Activated T-helper 2 cell treated with anti-CD3 and anti-CD28 coated beads, Interferon-gamma antibody, Interleukin-2, Interleukin-4, amounts not matched to agents 10 μg/mL and 5 μg/mL and 100 μg/mL, durations not matched to agents 14 hours and 24 hours and 36 hours (primary cell): ENCODE measurements at regions of chr6 and their contacts with region 1.

Region 1: DNA sequence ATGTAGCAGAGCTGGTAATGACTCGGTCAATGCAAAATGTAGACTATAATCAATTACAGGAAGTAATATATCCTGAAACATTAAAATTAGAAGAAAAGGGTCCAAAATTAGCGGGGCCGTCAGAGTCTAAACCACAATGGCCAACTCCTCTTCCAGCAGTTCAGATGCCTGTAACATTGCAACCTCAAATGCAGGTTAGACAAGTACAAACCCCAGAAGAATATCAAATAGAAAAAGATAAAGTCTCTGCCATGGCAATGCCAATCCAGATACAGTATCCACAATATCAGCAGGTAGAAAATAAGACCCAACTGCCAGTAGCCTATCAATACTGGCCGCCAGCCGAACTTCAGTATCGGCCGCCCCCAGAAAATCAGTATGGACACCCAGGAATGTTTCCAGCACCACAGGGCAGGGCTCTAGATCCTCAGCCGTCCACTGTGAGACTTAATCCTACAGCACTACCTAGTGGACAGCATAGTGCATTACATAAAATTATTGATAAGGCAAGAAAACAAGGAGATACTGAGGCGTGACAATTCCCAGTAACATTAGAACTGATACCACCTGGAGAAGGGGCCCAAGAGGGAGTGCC is 158.4 kb downstream of the GPX5 start:
- DNase-seq: no peak
- H3K4me3 Mint-ChIP-seq: no peak overlapping the region
- H3K27ac Mint-ChIP-seq: no peak overlapping the region
- H3K4me1 Mint-ChIP-seq: peaks cover 18% of the 10 kb centered on the region
- H3K27me3 Mint-ChIP-seq: peaks cover 73% of the 10 kb centered on the region

Region 2: GRCh38 chr6:28355743-28356665 is 328.0 kb before region 1 on chr6:
- intact Hi-C with region 1: loop called (anchors 1 kb)
- DNase-seq: peak; percentile 41
- H3K4me3 Mint-ChIP-seq: peak overlapping the region; percentile 86
- H3K27ac Mint-ChIP-seq: peak overlapping the region; percentile 72
- H3K4me1 Mint-ChIP-seq: peaks cover 17% of the 10 kb centered on the region
- H3K27me3 Mint-ChIP-seq: no peaks in the 10 kb centered on the region

Region 3: GRCh38 chr6:28496099-28496779 is 187.8 kb before region 1 on chr6:
- intact Hi-C with region 1: loop called (anchors 5 kb)
- DNase-seq: no peak
- H3K4me3 Mint-ChIP-seq: no peak overlapping the region
- H3K27ac Mint-ChIP-seq: no peak overlapping the region
- H3K4me1 Mint-ChIP-seq: no peaks in the 10 kb centered on the region
- H3K27me3 Mint-ChIP-seq: peaks cover 39% of the 10 kb centered on the region

Region 4: DNA sequence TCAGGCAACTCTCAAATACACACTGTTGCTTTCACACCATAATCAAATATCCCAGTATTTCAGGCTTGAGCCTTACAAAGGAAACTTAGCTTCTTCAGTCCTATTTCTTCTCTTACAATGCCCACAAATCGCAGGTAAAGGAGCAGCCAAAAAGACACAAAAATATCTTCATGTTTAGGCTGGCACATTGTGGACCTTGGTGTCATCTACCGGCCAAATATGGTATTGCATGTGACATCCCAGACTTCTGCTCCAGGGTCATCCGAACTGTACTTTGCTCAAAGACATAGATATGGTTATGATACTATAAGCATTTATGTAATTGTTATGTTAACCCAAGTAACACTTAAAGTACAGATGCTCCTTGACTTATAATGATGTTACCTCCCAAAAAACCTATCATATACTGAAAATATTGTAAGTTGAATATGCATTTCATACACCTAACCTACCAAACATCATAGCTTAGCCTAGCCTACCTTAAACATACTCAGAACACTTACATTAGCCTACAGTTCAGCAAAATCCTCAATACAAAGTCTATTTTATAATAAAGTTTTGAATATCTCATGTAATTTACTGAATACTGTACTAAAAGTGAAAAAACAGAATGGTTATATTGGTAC is 905.5 kb after region 1 on chr6:
- intact Hi-C with region 1: loop called (anchors 5 kb)
- DNase-seq: peak; percentile 23
- H3K4me3 Mint-ChIP-seq: no peak overlapping the region
- H3K27ac Mint-ChIP-seq: no peak overlapping the region
- H3K4me1 Mint-ChIP-seq: no peaks in the 10 kb centered on the region
- H3K27me3 Mint-ChIP-seq: peaks cover 25% of the 10 kb centered on the region